AG04450 (cell line): ENCODE measurements at regions of chr18 and their contacts with region 1.

Region 1: GRCh38 chr18:35386600-35387351 is 9.6 kb upstream of the ZNF396 start:
- DNase-seq: peak; percentile 63
- H3K4me3 ChIP-seq: no peak overlapping the region
- H3K27ac ChIP-seq: no peak overlapping the region
- H3K27me3 ChIP-seq: no peaks in the 10 kb centered on the region
- CTCF ChIP-seq: peak; percentile 94

Region 2: DNA sequence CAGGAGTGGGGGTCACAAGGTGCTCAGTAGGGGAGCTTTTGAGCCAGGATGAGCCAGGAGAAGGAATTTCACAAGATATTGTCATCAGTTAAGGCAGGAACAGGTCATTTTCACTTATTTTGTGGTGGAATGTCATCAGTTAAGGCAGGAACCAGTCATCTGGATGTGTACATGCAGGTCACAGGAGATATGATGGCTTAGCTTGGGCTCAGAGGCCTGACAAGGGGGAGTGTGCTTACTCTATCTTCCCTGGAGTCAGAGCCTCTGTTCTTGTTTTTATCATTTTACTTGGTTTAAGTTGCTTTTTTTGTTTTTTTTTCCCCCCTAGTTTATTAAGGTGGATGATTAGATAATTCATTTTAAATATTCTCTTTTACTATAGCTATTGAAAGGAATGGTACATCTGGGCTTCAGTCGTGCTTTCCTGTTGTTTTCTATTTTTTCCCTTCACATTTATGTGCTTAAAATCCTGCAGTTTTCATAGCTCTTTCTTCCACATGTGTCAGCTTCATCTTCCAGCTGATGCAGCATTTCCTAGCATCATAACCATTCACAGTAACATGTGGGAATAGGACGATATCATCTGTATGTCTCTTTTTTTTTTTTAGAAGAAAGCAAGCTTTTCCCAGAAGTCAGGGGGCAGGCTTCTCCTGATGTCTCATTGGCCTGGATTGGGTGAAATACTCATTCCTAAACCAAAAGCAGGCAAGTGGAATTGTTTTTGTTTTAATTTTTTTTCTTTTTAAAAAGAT is 25.0 kb before region 1 on chr18:
- CTCF ChIA-PET with region 1: interaction called, 13 read pairs
- POLR2A ChIA-PET with region 1: no interaction called
- DNase-seq: no peak
- H3K4me3 ChIP-seq: no peak overlapping the region
- H3K27ac ChIP-seq: no peak overlapping the region
- H3K27me3 ChIP-seq: no peaks in the 10 kb centered on the region
- CTCF ChIP-seq: no peak

Region 3: DNA sequence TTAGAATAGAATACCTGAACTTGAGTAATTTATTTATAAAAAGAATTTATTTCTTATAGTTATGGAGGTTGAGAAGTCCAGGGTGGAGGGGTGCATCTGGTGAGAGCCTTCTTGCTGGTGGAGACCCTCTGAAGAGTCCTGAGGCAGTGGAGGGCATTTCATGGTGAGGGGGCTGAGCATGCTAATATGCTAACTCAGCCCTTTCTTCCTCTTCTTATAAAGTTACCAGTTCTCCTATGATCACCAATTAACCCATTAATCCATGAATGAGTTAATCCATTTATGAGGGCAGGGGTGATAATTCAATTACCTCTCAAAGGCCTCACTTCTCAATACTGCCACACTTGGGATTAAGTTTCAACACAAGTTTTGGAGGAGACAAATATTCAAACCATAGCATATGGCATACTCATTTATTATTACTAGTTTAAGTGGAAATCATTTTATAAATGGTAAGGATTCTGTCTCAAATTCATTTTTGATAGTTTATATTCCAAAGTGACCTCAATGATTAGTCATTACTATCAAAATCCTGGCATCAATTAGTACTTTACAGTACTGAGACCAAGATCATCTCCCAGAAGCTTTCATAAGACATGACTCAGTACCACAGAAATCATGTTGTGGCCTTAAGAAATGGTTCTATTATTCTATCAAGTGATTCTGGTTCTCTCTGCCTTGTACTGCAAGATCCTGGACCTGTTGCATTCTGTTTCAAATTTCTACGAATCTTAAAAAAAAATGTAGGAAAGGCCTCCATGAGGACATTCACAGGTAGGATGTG is 15.2 kb before region 1 on chr18:
- CTCF ChIA-PET with region 1: interaction called, 15 read pairs
- POLR2A ChIA-PET with region 1: no interaction called
- DNase-seq: no peak
- H3K4me3 ChIP-seq: no peak overlapping the region
- H3K27ac ChIP-seq: no peak overlapping the region
- H3K27me3 ChIP-seq: no peaks in the 10 kb centered on the region
- CTCF ChIP-seq: no peak

Region 4: GRCh38 chr18:35397976-35398375 is 11.2 kb after region 1 on chr18:
- CTCF ChIA-PET with region 1: interaction called, 41 read pairs
- POLR2A ChIA-PET with region 1: no interaction called
- DNase-seq: no peak
- H3K4me3 ChIP-seq: no peak overlapping the region
- H3K27ac ChIP-seq: no peak overlapping the region
- H3K27me3 ChIP-seq: no peaks in the 10 kb centered on the region
- CTCF ChIP-seq: no peak